ENCODE measurements at regions of chr2 and their contacts with region 1.

Region 1: GRCh38 chr2:194104687-194105086 is 1552.3 kb upstream of the SLC39A10 start:
- DNase-seq: peak; percentile 77
- ATAC-seq: peak; percentile 98
- H3K4me3 ChIP-seq: no peak overlapping the region; the same call in 1 of the 2 replicates
- H3K27ac ChIP-seq: peak overlapping the region; percentile 62
- H3K4me1 ChIP-seq: peaks cover 13% of the 10 kb centered on the region
- H3K27me3 ChIP-seq: no peaks in the 10 kb centered on the region
- CTCF ChIP-seq: no peak
- EP300 ChIP-seq: peak in 1 of 2 experiments; percentile 77; a peak in 1 of 4 replicates
- POLR2A ChIP-seq: no peak
- RAD21 ChIP-seq: no peak

Region 2: DNA sequence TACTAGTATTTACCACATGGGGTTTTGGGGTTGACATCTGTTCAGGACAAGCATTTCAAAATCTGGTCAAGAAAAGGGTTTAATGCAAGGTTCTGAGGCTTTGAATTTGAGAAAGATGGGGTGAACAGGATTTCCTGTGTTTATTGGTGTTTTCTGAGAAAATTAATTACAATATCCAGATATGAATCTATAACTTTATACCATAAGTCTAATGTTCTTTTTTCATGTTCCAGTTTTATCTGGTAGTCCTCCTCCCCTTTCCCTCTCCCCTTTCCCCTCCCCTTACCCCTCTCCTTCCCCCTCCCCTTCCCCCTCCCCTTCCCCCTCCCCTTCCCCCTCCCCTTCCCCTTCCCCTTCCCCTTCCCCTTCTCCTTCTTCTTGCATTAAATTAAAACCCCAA is 391.8 kb before region 1 on chr2:
- CTCF ChIA-PET with region 1: no interaction called
- POLR2A ChIA-PET with region 1: no interaction called
- RAD21 ChIA-PET with region 1: no interaction called
- SMC1A ChIA-PET with region 1: no interaction called
- in situ Hi-C with region 1: no loop called
- intact Hi-C with region 1: no loop called
- DNase-seq: no peak
- ATAC-seq: no peak
- H3K4me3 ChIP-seq: no peak overlapping the region
- H3K27ac ChIP-seq: no peak overlapping the region
- H3K4me1 ChIP-seq: no peaks in the 10 kb centered on the region
- H3K27me3 ChIP-seq: no peaks in the 10 kb centered on the region
- CTCF ChIP-seq: no peak
- EP300 ChIP-seq: no peak
- POLR2A ChIP-seq: no peak
- RAD21 ChIP-seq: no peak

Region 3: GRCh38 chr2:194087089-194087958 is 17.4 kb before region 1 on chr2:
- CTCF ChIA-PET with region 1: interaction called, 3 read pairs
- POLR2A ChIA-PET with region 1: no interaction called
- RAD21 ChIA-PET with region 1: interaction called, 3 read pairs
- SMC1A ChIA-PET with region 1: interaction called, 12 read pairs
- in situ Hi-C with region 1: no loop called
- intact Hi-C with region 1: no loop called
- DNase-seq: no peak
- ATAC-seq: no peak; the same call in 1 of the 3 replicates
- H3K4me3 ChIP-seq: no peak overlapping the region
- H3K27ac ChIP-seq: no peak overlapping the region
- H3K4me1 ChIP-seq: no peaks in the 10 kb centered on the region
- H3K27me3 ChIP-seq: no peaks in the 10 kb centered on the region
- CTCF ChIP-seq: no peak
- EP300 ChIP-seq: no peak
- POLR2A ChIP-seq: no peak
- RAD21 ChIP-seq: no peak